ENCODE measurements at regions of chr20 and their contacts with region 1.

Region 1: DNA sequence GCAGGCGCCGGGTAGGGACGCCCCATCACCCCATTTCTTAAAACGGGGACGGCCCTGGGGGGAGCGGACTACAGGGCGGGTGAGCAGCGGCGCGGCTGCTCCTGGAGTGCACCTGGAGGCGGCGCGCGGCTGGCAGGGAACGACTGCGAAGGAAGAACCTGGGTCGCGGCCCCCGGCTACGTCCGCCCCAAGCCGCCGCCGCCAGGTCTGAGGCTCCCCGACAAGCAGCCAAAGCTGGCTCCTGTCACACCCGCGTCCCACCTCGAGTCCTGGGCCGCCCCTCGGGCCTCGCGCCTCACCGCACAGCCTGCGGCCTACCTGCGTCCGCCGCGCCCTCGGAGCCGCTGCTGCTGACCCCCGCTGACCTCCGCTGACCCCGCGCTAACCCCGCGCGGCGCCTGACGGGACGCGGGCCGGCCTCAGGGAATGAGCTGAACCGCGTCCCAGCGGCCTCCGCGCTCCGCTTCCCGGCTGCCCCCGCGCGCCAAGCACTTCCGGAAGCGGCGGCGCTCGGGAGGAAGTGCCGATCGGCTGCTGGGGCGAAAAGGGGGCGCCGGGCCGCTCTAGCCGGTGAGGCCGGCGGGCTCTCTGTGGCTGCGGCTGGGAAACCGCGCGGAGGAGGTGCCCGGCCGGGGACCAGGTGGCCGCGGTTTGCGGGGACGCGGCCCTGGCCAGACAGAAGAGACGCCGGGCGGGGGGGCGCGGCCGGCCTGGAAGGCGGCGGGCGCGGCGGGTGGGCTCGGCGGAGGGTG is at the starts of genes ARFRP1 and ZGPAT:
- DNase-seq: peak; percentile 96
- ATAC-seq: peak; percentile 81
- H3K4me3 Mint-ChIP-seq: peak within 1 kb of the TSS; percentile 88
- H3K27ac Mint-ChIP-seq: peak within 1 kb of the TSS; percentile 87
- H3K4me1 Mint-ChIP-seq: peaks cover 38% of the 10 kb centered on the region
- H3K27me3 Mint-ChIP-seq: no peaks in the 10 kb centered on the region
- total RNA-seq, gene ARFRP1: 68.8 to 73.1 TPM
- total RNA-seq, gene ZGPAT: 43.0 to 44.5 TPM

Region 2: DNA sequence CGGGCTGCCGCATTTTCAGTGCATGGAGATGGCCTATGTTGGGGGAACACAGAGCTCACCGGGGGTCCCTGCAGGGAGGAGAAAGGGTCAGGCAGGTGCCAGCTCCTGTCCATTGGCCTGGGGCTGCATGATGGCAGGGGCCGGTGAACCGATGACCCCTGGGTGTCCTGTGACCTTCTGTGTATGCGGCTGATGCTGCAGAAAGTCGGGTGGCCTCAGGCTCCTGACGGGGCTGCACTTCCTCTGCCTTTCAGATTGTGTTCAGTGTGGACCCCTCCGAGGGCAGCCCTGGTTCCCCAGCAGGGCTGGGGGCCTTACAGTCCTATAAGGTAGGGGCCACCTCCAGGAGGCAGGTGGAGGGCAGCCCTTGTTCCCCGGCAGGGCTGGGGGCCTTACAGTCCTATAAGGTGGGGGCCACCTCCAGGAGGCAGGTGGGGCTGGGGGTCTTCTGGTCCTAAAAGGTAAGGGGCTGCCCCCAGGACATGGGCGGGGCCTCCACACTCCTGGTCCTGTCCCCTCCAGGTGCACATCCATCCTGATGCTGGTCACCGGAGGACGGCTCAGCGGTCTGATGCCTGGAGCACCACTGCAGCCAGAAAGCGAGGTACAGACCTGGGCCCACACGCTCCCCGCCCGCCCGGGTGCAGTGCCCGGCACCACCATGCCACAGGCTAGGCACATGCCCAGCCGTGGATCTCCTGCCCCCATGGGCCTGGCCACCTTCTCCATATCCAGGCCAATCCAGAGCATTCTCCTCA is 22.3 kb before region 1 on chr20:
- POLR2A ChIA-PET with region 1: no interaction called
- DNase-seq: no peak
- ATAC-seq: no peak
- H3K4me3 Mint-ChIP-seq: no peak overlapping the region
- H3K27ac Mint-ChIP-seq: no peak overlapping the region
- H3K4me1 Mint-ChIP-seq: no peaks in the 10 kb centered on the region
- H3K27me3 Mint-ChIP-seq: no peaks in the 10 kb centered on the region

Region 3: GRCh38 chr20:63696306-63696627 is 11.5 kb before region 1 on chr20:
- POLR2A ChIA-PET with region 1: interaction called, 16 read pairs
- DNase-seq: no peak
- ATAC-seq: peak; percentile 70
- H3K4me3 Mint-ChIP-seq: no peak overlapping the region
- H3K27ac Mint-ChIP-seq: peak overlapping the region; percentile 58
- H3K4me1 Mint-ChIP-seq: peaks cover 5% of the 10 kb centered on the region
- H3K27me3 Mint-ChIP-seq: no peaks in the 10 kb centered on the region

Region 4: DNA sequence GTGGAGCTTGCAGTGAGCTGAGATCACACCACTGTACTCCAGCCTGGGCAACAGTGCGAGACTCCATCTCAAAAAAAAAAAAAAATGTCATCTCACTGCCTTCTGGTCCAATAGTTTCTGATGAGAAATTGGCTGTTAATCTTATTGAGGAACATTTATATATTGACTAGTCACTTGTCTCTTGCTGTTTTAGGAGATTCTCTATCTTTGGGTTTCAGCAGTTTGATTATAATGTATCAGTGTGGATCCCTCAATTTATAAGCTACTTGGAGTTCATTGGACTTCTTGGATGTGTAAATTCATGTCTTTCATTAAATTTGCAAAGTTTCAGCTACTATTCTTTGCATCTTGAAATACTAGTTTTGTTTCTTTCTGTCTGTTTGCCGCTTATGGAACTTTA is 11.3 kb after region 1 on chr20:
- POLR2A ChIA-PET with region 1: interaction called, 11 read pairs
- DNase-seq: no peak
- ATAC-seq: no peak
- H3K4me3 Mint-ChIP-seq: no peak overlapping the region
- H3K27ac Mint-ChIP-seq: no peak overlapping the region
- H3K4me1 Mint-ChIP-seq: peaks cover 9% of the 10 kb centered on the region
- H3K27me3 Mint-ChIP-seq: no peaks in the 10 kb centered on the region

Region 5: GRCh38 chr20:63731392-63731791 is 23.7 kb after region 1 on chr20:
- POLR2A ChIA-PET with region 1: interaction called, 98 read pairs
- DNase-seq: no peak
- ATAC-seq: no peak
- H3K4me3 Mint-ChIP-seq: no peak overlapping the region
- H3K27ac Mint-ChIP-seq: no peak overlapping the region
- H3K4me1 Mint-ChIP-seq: peaks cover 30% of the 10 kb centered on the region
- H3K27me3 Mint-ChIP-seq: no peaks in the 10 kb centered on the region

Region 6: GRCh38 chr20:63739130-63740069 is 31.7 kb after region 1 on chr20 and contains the start of gene SLC2A4RG:
- POLR2A ChIA-PET with region 1: interaction called, 98 read pairs
- DNase-seq: peak; percentile 88
- ATAC-seq: peak; percentile 41
- H3K4me3 Mint-ChIP-seq: peak within 1 kb of the TSS; percentile 70
- H3K27ac Mint-ChIP-seq: peak within 1 kb of the TSS; percentile 30
- H3K4me1 Mint-ChIP-seq: peaks cover 11% of the 10 kb centered on the region
- H3K27me3 Mint-ChIP-seq: no peaks in the 10 kb centered on the region
- total RNA-seq, gene SLC2A4RG: 128 to 134 TPM

Region 7: DNA sequence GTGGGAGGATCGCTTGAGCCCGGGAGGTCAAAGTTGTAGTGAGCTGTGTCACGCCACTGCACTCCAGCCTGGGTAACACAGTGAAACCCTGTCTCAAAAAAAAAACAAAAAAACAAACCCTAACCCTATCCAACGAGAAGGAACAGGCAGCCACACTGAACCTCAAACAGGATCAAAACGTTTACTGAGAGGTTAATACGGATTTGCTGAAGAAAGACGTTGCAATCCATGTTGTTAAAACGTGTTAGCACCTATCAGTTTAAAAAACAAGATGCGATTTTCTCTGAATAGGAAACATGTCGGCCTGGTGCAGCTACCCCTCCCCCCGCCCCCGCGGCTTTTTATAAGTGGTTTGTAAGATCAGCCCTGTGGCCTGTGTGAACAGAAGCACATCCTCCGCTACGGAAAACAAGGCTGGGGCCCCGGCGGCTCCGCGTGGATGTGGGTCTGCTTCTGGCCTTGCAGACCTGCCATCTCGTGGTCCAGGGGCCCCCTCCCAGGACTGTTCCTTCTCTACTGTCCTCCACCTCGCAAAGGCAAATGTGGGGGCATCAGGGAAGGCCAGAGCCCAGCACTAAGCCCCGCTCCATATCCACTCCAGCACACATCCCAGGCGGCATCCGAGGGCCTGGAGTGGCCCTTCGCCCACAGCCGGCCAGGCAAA is 43.2 kb after region 1 on chr20:
- POLR2A ChIA-PET with region 1: interaction called, 13 read pairs
- DNase-seq: peak; percentile 76
- ATAC-seq: peak; percentile 82
- H3K4me3 Mint-ChIP-seq: peak overlapping the region; percentile 71
- H3K27ac Mint-ChIP-seq: peak overlapping the region; percentile 94
- H3K4me1 Mint-ChIP-seq: peaks cover 15% of the 10 kb centered on the region
- H3K27me3 Mint-ChIP-seq: no peaks in the 10 kb centered on the region

Region 8: GRCh38 chr20:63864847-63865640 is 157.3 kb after region 1 on chr20 and contains the start of gene TPD52L2:
- POLR2A ChIA-PET with region 1: interaction called, 27 read pairs
- DNase-seq: peak; percentile 95
- ATAC-seq: peak; percentile 83
- H3K4me3 Mint-ChIP-seq: peak within 1 kb of the TSS; percentile 100
- H3K27ac Mint-ChIP-seq: peak within 1 kb of the TSS; percentile 98
- H3K4me1 Mint-ChIP-seq: peaks cover 15% of the 10 kb centered on the region
- H3K27me3 Mint-ChIP-seq: no peaks in the 10 kb centered on the region
- total RNA-seq, gene TPD52L2: 37.9 to 39.5 TPM

Measured in activated naive CD8-positive, alpha-beta T cell treated with anti-CD3 and anti-CD28 coated beads, Interleukin-2, amount 10 ng/mL, durations not matched to agents 7 days and 5 days (primary cell).